Aorta (tissue), 5 donors: ENCODE measurements at regions of chr4 and their contacts with region 1.

Region 1: GRCh38 chr4:47478814-47479213 is 6.3 kb upstream of the ATP10D start:
- DNase-seq: no peak
- ATAC-seq: no peak
- H3K4me3 ChIP-seq: no peak overlapping the region
- H3K27ac ChIP-seq: no peak overlapping the region
- H3K4me1 ChIP-seq: no peaks in the 10 kb centered on the region
- H3K27me3 ChIP-seq: no peaks in the 10 kb centered on the region

Region 2: DNA sequence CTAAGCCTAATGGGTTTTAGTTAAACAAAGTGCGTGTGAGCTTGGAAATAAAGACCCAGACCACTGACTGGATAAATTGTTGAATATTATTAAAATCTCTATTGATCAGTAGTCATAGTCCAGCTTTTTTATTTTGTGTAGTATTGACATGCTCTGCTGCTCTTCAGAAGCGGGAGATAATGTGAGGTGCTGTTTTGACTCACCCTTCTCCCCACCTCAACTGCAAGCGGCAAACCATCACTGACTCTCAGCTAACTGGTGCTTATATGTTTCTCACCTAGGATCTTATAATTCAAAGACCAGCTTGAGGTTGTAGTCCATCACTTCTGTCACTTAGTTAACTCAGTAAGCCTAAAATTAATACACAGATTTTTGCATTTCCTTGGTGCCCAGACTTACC is 87.6 kb before region 1 on chr4:
- intact Hi-C with region 1: no loop called
- DNase-seq: no peak
- ATAC-seq: no peak
- H3K4me3 ChIP-seq: no peak overlapping the region
- H3K27ac ChIP-seq: no peak overlapping the region
- H3K4me1 ChIP-seq: no peaks in the 10 kb centered on the region
- H3K27me3 ChIP-seq: no peaks in the 10 kb centered on the region

Region 3: DNA sequence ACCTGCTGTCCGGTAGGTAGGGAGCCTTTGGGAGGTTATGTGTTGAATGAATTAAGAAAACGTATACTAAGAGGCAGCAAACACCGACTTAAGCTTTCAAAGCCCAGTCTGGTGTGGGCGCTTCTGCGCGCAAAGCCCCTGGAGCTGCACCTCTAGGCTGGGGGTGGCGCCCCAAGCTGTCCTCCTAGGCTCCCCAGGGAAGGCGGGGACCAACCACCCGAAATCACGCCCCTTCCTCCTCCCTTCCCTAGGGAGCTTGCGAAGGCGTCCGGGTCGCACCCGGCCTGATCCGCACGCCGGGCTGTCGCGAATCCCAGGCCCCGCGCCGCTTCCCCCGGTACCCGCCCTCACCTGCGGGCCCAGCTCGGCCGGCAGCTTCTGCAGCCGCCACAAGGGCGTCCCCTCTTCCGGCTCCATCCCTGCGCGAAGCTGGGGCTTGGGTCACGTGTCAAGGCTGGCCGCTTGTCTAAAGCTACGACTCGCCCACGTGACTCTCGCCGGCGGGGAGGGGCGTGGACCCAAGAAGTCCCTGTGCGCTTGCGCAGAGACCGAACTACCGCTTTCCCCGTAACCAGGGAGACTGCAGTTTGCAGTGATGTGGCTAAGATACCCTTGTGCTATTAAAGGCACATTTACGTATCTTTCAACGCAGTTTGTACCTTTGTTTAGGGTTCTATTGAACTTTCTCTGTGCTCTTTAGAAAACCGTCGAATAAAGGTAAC is 15.4 kb before region 1 on chr4 and contains the start of gene COMMD8:
- intact Hi-C with region 1: loop called in 1 of 2 experiments (anchors 1 kb)
- DNase-seq: peak; percentile 98 to 99
- ATAC-seq: peak; percentile 100
- H3K4me3 ChIP-seq: peak within 1 kb of the TSS; percentile 39 to 78
- H3K27ac ChIP-seq: peak within 1 kb of the TSS; percentile 8 to 48
- H3K4me1 ChIP-seq: no peaks in the 10 kb centered on the region
- H3K27me3 ChIP-seq: no peaks in the 10 kb centered on the region
- total RNA-seq, gene COMMD8: 10.0 to 11.7 TPM